Heart left ventricle (tissue), 16 donors: ENCODE measurements at regions of chr1 and their contacts with region 1.

Region 1: GRCh38 chr1:99691175-99691574 is 45.3 kb downstream of the PALMD start:
- DNase-seq: no peak
- ATAC-seq: peak; percentile 6 to 78 (median 55)
- H3K4me3 ChIP-seq: no peak overlapping the region
- H3K27ac ChIP-seq: peak overlapping the region in 10 of 12 donors; percentile 3 to 65 (median 44)
- H3K4me1 ChIP-seq: peaks cover 0 to 35% (median 16%) of the 10 kb centered on the region in 12 donors
- H3K27me3 ChIP-seq: no peaks in the 10 kb centered on the region
- CTCF ChIP-seq: no peak
- POLR2A ChIP-seq: no peak

Region 2: DNA sequence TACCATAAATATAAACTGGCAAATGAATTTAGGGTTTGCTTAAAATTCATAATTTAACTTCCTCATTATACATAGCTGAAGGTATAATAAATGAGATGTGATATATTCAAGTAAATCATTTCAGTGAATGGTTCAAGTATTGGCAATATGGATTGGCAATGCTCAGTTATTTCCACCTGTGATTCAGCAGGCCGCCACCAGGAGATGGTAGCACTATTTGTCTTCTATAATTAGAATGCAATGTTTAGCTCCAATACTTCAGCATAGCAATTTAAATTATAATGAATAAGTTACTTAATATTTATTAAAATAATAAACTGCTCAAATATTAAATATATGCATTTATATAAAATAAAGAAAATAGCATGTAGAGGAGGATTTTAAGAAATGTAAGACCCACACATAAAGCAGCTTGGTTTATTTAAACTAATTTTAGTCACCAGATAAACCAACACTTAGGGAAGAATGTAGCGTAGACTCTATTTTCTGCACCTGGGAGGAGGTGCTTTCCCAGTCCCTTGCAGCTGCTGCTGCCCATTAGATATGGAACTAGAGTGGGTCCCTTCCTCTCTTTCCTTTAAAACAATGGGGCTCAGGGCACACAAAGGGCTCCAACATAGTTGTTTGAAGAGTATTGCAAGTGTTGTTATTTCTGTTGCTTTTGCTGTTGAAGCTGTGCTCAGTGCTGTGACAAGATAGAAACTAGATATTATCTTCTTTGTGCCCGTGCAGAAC is 364.8 kb before region 1 on chr1:
- intact Hi-C with region 1: loop called in 1 of 10 experiments (anchors 10 kb)
- DNase-seq: no peak
- ATAC-seq: no peak
- H3K4me3 ChIP-seq: no peak overlapping the region
- H3K27ac ChIP-seq: no peak overlapping the region
- H3K4me1 ChIP-seq: peaks cover 0 to 4% (median 0%) of the 10 kb centered on the region in 12 donors
- H3K27me3 ChIP-seq: no peaks in the 10 kb centered on the region
- CTCF ChIP-seq: peak in 11 of 12 donors; percentile 14 to 49 (median 25)
- POLR2A ChIP-seq: no peak

Region 3: DNA sequence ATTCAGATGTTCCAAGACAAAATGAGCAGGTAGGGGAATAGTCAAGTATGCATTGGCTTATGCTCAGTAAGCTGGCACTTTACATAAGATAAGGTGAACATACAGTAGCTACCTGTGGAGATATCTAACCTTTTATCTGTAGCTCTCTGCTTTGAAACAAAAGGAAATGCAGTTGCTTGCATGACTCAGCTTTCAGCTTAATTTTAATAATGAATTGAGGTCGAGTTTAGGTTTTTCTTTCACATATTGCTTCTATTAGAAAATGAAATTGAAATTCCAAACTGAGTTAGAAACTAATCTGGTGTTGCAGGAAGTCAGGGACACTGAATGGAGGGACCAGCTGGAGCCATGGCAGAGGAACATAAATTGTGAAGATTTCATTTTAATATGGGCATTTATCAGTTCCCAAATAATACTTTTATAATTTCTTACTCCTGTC is 66.9 kb after region 1 on chr1:
- intact Hi-C with region 1: no loop called
- DNase-seq: no peak
- ATAC-seq: no peak
- H3K4me3 ChIP-seq: no peak overlapping the region
- H3K27ac ChIP-seq: peak overlapping the region in 1 of 12 donors; percentile 72
- H3K4me1 ChIP-seq: peaks cover 0 to 40% (median 4%) of the 10 kb centered on the region in 12 donors
- H3K27me3 ChIP-seq: no peaks in the 10 kb centered on the region
- CTCF ChIP-seq: no peak
- POLR2A ChIP-seq: no peak

Region 4: GRCh38 chr1:99784143-99784542 is 93.0 kb after region 1 on chr1:
- intact Hi-C with region 1: no loop called
- DNase-seq: no peak
- ATAC-seq: peak; percentile 56 to 88 (median 78)
- H3K4me3 ChIP-seq: no peak overlapping the region
- H3K27ac ChIP-seq: peak overlapping the region in 2 of 12 donors; percentile 2 to 40
- H3K4me1 ChIP-seq: peaks cover 0 to 18% (median 0%) of the 10 kb centered on the region in 12 donors
- H3K27me3 ChIP-seq: peaks cover 0 to 1% (median 0%) of the 10 kb centered on the region in 9 donors
- CTCF ChIP-seq: no peak
- POLR2A ChIP-seq: no peak